Body of pancreas (tissue), 4 donors: ENCODE measurements at regions of chr12 and their contacts with region 1.

Region 1: GRCh38 chr12:122856999-122857671 is 21.9 kb downstream of the HIP1R start:
- DNase-seq: no peak
- ATAC-seq: no peak
- H3K4me3 ChIP-seq: no peak overlapping the region
- H3K27ac ChIP-seq: no peak overlapping the region
- H3K4me1 ChIP-seq: peaks cover 27% of the 10 kb centered on the region
- H3K27me3 ChIP-seq: no peaks in the 10 kb centered on the region
- CTCF ChIP-seq: no peak
- POLR2A ChIP-seq: no peak

Region 2: GRCh38 chr12:122946690-122947341 is 89.7 kb after region 1 on chr12:
- intact Hi-C with region 1: loop called (anchors 5 kb)
- DNase-seq: peak; percentile 51 to 86 (median 72)
- ATAC-seq: peak; percentile 53
- H3K4me3 ChIP-seq: no peak overlapping the region
- H3K27ac ChIP-seq: peak overlapping the region; percentile 28 to 69 (median 59)
- H3K4me1 ChIP-seq: peaks cover 22% of the 10 kb centered on the region
- H3K27me3 ChIP-seq: no peaks in the 10 kb centered on the region
- CTCF ChIP-seq: peak in 1 of 7 experiments; percentile 11
- POLR2A ChIP-seq: no peak